Calu3 (cell line): ENCODE measurements at regions of chr1 and their contacts with region 1.

Region 1: GRCh38 chr1:224894918-224895317 is 34.6 kb upstream of the DNAH14 start:
- DNase-seq: no peak
- H3K4me3 Mint-ChIP-seq: no peak overlapping the region
- H3K27ac Mint-ChIP-seq: no peak overlapping the region
- H3K4me1 Mint-ChIP-seq: no peaks in the 10 kb centered on the region
- H3K27me3 Mint-ChIP-seq: peaks cover 22% of the 10 kb centered on the region
- CTCF ChIP-seq: peak; percentile 26

Region 2: GRCh38 chr1:224678168-224678567 is 216.8 kb before region 1 on chr1:
- CTCF ChIA-PET with region 1: interaction called, 13 read pairs
- intact Hi-C with region 1: no loop called
- DNase-seq: no peak
- H3K4me3 Mint-ChIP-seq: no peak overlapping the region
- H3K27ac Mint-ChIP-seq: no peak overlapping the region
- H3K4me1 Mint-ChIP-seq: no peaks in the 10 kb centered on the region
- H3K27me3 Mint-ChIP-seq: peaks cover 64% of the 10 kb centered on the region
- CTCF ChIP-seq: no peak